ENCODE measurements at regions of chr12 and their contacts with region 1.

Region 1: GRCh38 chr12:5787828-5788227 is 157.2 kb downstream of the ANO2 start:
- DNase-seq: no peak
- H3K4me3 Mint-ChIP-seq: no peak overlapping the region
- H3K27ac Mint-ChIP-seq: no peak overlapping the region
- H3K4me1 Mint-ChIP-seq: no peaks in the 10 kb centered on the region
- H3K27me3 Mint-ChIP-seq: no peaks in the 10 kb centered on the region
- CTCF ChIP-seq: no peak

Region 2: GRCh38 chr12:5593086-5593485 is 194.7 kb before region 1 on chr12:
- CTCF ChIA-PET with region 1: no interaction called
- POLR2A ChIA-PET with region 1: no interaction called
- intact Hi-C with region 1: no loop called
- DNase-seq: no peak
- H3K4me3 Mint-ChIP-seq: no peak overlapping the region
- H3K27ac Mint-ChIP-seq: no peak overlapping the region
- H3K4me1 Mint-ChIP-seq: no peaks in the 10 kb centered on the region
- H3K27me3 Mint-ChIP-seq: no peaks in the 10 kb centered on the region
- CTCF ChIP-seq: no peak

Region 3: GRCh38 chr12:5856692-5857091 is 68.9 kb after region 1 on chr12:
- CTCF ChIA-PET with region 1: no interaction called
- POLR2A ChIA-PET with region 1: no interaction called
- intact Hi-C with region 1: loop called (anchors 2 kb)
- DNase-seq: no peak
- H3K4me3 Mint-ChIP-seq: no peak overlapping the region
- H3K27ac Mint-ChIP-seq: no peak overlapping the region
- H3K4me1 Mint-ChIP-seq: no peaks in the 10 kb centered on the region
- H3K27me3 Mint-ChIP-seq: peaks cover 20% of the 10 kb centered on the region
- CTCF ChIP-seq: no peak

Measured in MCF 10A (cell line).